ENCODE measurements at regions of chr1 and their contacts with region 1.

Region 1: GRCh38 chr1:226626577-226626956 is 78.0 kb downstream of the STUM start:
- DNase-seq: peak; percentile 79
- H3K4me3 Mint-ChIP-seq: no peak overlapping the region
- H3K27ac Mint-ChIP-seq: no peak overlapping the region
- H3K4me1 Mint-ChIP-seq: peaks cover 20% of the 10 kb centered on the region
- H3K27me3 Mint-ChIP-seq: peaks cover 1% of the 10 kb centered on the region

Region 2: GRCh38 chr1:226687426-226687825 is 60.9 kb after region 1 on chr1:
- CTCF ChIA-PET with region 1: interaction called, 11 read pairs
- POLR2A ChIA-PET with region 1: no interaction called
- DNase-seq: peak; percentile 30
- H3K4me3 Mint-ChIP-seq: no peak overlapping the region
- H3K27ac Mint-ChIP-seq: no peak overlapping the region
- H3K4me1 Mint-ChIP-seq: peaks cover 97% of the 10 kb centered on the region
- H3K27me3 Mint-ChIP-seq: no peaks in the 10 kb centered on the region

Region 3: GRCh38 chr1:226725897-226726267 is 99.3 kb after region 1 on chr1:
- CTCF ChIA-PET with region 1: interaction called, 4 read pairs
- POLR2A ChIA-PET with region 1: interaction called, 13 read pairs
- DNase-seq: no peak
- H3K4me3 Mint-ChIP-seq: peak overlapping the region; percentile 38
- H3K27ac Mint-ChIP-seq: peak overlapping the region; percentile 76
- H3K4me1 Mint-ChIP-seq: peaks cover 94% of the 10 kb centered on the region
- H3K27me3 Mint-ChIP-seq: no peaks in the 10 kb centered on the region

Region 4: GRCh38 chr1:226827968-226828513 is 201.5 kb after region 1 on chr1:
- CTCF ChIA-PET with region 1: interaction called, 11 read pairs
- POLR2A ChIA-PET with region 1: no interaction called
- DNase-seq: peak; percentile 97
- H3K4me3 Mint-ChIP-seq: peak overlapping the region; percentile 28
- H3K27ac Mint-ChIP-seq: peak overlapping the region; percentile 91
- H3K4me1 Mint-ChIP-seq: peaks cover 16% of the 10 kb centered on the region
- H3K27me3 Mint-ChIP-seq: peaks cover 3% of the 10 kb centered on the region

Measured in activated CD4-positive, alpha-beta T cell treated with anti-CD3 and anti-CD28 coated beads, Interleukin-2, amount 10 ng/mL, durations not matched to agents 7 days and 5 days (primary cell).